Gastrocnemius medialis (tissue), 4 donors: ENCODE measurements at regions of chr1 and their contacts with region 1.

Region 1: DNA sequence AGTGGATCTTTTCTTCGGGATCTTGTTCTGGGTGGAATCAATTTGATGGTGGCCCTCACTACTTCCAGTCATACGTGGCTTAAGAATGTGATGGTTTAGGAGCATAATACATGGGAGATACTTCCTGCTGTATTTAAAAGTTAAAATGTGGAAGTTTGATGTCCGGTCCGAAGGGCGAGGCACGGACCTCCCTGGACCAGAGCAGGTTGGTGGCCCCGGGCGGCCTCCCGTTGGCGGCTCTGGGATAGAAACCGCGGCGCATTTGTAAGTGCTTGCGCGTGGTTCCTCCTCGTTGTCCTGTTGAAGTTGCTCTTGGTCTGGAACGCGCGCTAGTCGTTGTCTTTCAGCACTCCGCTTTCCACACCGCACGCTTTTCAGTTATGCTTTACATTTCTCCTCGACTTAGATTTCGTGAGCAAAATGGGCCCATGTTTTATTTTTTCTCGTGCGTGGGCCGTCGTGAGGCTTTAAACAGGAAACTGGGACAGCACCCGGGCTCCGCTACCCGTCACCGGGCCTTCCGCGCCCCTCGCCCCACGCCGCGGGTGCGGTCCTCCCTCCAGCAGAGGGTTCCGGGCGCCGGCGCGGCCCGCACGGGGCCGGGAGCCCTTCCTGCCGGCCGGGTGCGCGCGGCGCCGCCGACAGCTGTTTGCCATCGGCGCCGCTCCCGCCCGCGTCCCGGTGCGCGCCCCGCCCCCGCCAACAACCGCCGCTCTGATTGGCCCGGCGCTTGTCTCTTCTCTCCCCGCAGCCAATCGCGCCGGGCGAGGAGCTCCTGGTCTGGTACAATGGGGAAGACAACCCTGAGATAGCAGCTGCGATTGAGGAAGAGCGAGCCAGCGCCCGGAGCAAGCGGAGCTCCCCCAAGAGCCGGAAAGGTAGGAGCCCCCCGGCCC is 48.9 kb downstream of the PRDM2 start:
- DNase-seq: peak; percentile 97 to 98
- ATAC-seq: peak; percentile 96
- H3K4me3 ChIP-seq: peak overlapping the region; percentile 72 to 94 (median 78)
- H3K27ac ChIP-seq: peak overlapping the region; percentile 89 to 97 (median 94)
- H3K4me1 ChIP-seq: peaks cover 39 to 42% of the 10 kb centered on the region in 2 donors
- H3K27me3 ChIP-seq: no peaks in the 10 kb centered on the region
- CTCF ChIP-seq: peak in 3 of 5 experiments; percentile 12 to 39 (median 22)
- POLR2A ChIP-seq: peak; percentile 92 to 97

Region 2: DNA sequence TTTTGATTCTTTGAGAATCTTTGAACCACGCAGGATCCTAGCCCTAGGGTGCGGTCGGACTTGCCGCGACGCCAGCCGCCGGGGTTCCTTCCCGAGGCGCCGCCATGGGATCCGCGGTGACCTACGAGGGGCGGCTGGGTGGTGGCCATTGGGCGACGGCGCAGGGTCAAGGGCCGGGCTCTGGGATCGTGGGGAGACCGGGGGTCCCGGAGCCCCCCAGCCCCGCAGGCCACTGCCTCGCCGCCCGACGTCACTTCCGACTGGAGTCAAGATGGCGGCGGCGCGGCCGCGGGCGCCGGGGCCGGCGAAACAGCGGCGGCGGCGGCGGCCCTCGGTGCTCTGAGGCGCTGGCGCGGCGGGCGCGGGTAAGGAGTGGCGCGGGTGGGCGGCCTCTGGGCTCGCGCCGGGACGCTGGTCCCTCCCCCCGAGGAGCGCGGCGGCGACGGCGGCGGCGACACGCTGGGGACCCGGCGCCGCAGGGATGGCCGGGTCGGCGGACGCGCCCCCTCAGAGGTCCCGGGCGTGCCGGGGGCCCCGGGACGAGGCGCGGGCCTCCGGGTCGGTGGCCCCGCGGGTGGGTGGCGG is 48.8 kb before region 1 on chr1 and contains the start of gene PRDM2:
- in situ Hi-C with region 1: no loop called
- intact Hi-C with region 1: loop called (anchors 5 kb)
- DNase-seq: peak in 1 of 2 donors; percentile 29
- ATAC-seq: peak; percentile 77 to 80
- H3K4me3 ChIP-seq: peak within 1 kb of the TSS; percentile 76 to 92 (median 84)
- H3K27ac ChIP-seq: peak within 1 kb of the TSS; percentile 82 to 88 (median 86)
- H3K4me1 ChIP-seq: peaks cover 4% of the 10 kb centered on the region in 2 donors
- H3K27me3 ChIP-seq: peaks cover 0 to 7% (median 4%) of the 10 kb centered on the region in 3 donors
- CTCF ChIP-seq: no peak
- POLR2A ChIP-seq: peak; percentile 24 to 44
- total RNA-seq, gene PRDM2: 24.1 to 38.3 (median 35.6) TPM

Region 3: DNA sequence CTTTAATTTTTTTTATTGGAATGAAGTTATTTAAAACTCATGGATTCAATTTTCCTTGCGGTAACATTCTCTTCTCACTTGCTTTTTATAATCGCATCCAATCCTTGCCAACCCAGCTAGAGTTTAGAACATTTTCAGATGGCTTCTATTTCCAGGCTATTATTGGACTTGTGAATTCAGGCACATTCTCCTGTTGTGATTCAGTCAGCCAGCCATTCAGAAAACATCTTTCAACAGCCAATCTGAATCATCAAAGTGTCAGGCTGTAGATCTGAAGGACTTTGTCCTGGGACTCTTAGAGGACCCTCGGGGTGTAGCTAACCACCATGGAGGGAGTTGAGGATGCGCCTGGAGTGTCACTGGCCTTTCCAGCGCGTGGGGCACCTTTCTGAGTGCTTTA is 43.6 kb after region 1 on chr1:
- in situ Hi-C with region 1: no loop called
- intact Hi-C with region 1: loop called (anchors 1 kb)
- DNase-seq: peak in 1 of 2 donors; percentile 24
- ATAC-seq: peak; percentile 87 to 94
- H3K4me3 ChIP-seq: no peak overlapping the region
- H3K27ac ChIP-seq: peak overlapping the region; percentile 78 to 90 (median 88)
- H3K4me1 ChIP-seq: peaks cover 66 to 75% of the 10 kb centered on the region in 2 donors
- H3K27me3 ChIP-seq: no peaks in the 10 kb centered on the region
- CTCF ChIP-seq: no peak
- POLR2A ChIP-seq: no peak

Region 4: DNA sequence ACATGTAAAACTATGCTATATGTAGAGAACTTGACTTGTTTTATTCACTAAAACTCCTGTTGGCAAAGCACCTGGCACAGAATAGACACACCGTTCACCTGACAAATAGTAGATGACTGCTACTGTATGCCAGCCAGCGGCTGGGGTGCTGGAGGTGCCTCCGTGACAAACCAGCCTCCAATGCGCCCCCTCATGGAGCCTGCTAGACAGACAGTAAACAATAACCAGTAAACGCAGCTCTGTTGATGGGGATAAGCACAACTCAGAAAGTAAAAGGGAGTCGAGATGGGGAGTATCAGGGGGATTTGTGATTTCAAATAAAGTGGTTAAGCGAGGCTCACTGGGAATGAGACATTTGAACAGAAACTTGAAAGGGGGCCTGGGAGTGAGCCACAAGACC is 58.4 kb after region 1 on chr1:
- in situ Hi-C with region 1: loop called in 1 of 4 experiments (anchors 10 kb)
- intact Hi-C with region 1: no loop called
- DNase-seq: no peak
- ATAC-seq: no peak
- H3K4me3 ChIP-seq: no peak overlapping the region
- H3K27ac ChIP-seq: no peak overlapping the region
- H3K4me1 ChIP-seq: peaks cover 0 to 2% of the 10 kb centered on the region in 2 donors
- H3K27me3 ChIP-seq: no peaks in the 10 kb centered on the region
- CTCF ChIP-seq: no peak
- POLR2A ChIP-seq: no peak

Region 5: GRCh38 chr1:13967707-13968106 is 218.8 kb after region 1 on chr1:
- in situ Hi-C with region 1: no loop called
- intact Hi-C with region 1: no loop called
- DNase-seq: no peak
- ATAC-seq: no peak
- H3K4me3 ChIP-seq: no peak overlapping the region
- H3K27ac ChIP-seq: no peak overlapping the region
- H3K4me1 ChIP-seq: no peaks in the 10 kb centered on the region
- H3K27me3 ChIP-seq: peaks cover 0 to 2% (median 0%) of the 10 kb centered on the region in 3 donors
- CTCF ChIP-seq: no peak
- POLR2A ChIP-seq: no peak

Region 6: DNA sequence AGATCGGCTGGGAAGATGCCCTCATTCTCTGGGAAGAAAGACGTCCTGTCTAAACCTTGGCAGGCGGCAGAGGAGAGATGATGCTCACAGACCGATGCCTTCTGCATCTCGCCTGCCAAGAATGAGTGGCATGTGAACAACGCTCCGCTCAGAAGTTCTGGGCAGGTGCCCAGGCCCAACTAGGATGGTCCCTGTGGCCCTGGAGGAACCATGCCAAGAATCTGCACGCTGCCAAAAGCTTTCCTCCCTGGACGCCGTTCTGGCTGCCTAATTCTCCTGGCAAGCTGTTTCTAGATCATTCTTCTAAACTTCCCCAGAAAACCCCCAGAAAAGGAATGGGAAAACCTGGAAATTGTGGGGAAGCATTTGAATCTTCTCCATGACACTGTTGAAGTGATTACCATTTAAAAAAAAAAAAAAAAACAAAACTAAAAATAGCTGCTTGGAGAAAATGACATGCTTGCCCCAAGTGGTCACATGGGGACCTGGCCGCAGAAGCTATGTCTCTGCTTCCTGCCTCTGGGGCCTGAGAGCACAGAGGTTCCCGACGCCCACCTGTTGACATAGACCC is 392.1 kb after region 1 on chr1:
- in situ Hi-C with region 1: no loop called
- intact Hi-C with region 1: no loop called
- DNase-seq: peak in 1 of 2 donors; percentile 28
- ATAC-seq: no peak
- H3K4me3 ChIP-seq: no peak overlapping the region
- H3K27ac ChIP-seq: no peak overlapping the region
- H3K4me1 ChIP-seq: no peaks in the 10 kb centered on the region
- H3K27me3 ChIP-seq: peaks cover 0 to 12% (median 0%) of the 10 kb centered on the region in 3 donors
- CTCF ChIP-seq: no peak
- POLR2A ChIP-seq: no peak